Left colon (tissue), 2 donors: ENCODE measurements at regions of chr3 and their contacts with region 1.

Region 1: GRCh38 chr3:197256836-197257444 is 41.5 kb downstream of the DLG1 start:
- DNase-seq: peak in 1 of 2 donors; percentile 30
- ATAC-seq: peak; percentile 43

Region 2: DNA sequence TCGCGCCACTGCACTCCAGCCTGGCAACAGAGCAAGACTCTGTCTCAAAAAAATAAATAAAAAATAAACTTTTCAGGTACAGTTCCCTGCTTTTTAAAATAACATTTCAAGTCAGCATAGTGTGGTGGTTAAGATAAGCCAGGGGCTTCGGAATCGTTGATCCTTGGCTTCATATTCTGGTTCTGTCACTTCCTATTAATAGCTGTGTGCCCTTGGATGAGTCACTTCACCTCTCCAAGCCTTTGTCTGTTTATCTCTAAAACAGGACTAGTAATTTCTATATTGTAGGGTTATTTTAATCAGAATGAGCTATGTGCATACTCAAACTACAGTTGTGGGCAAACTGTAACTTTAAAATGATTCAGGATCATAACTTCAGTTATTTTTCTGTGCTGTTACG is 443.0 kb before region 1 on chr3:
- intact Hi-C with region 1: no loop called
- DNase-seq: no peak
- ATAC-seq: no peak

Region 3: DNA sequence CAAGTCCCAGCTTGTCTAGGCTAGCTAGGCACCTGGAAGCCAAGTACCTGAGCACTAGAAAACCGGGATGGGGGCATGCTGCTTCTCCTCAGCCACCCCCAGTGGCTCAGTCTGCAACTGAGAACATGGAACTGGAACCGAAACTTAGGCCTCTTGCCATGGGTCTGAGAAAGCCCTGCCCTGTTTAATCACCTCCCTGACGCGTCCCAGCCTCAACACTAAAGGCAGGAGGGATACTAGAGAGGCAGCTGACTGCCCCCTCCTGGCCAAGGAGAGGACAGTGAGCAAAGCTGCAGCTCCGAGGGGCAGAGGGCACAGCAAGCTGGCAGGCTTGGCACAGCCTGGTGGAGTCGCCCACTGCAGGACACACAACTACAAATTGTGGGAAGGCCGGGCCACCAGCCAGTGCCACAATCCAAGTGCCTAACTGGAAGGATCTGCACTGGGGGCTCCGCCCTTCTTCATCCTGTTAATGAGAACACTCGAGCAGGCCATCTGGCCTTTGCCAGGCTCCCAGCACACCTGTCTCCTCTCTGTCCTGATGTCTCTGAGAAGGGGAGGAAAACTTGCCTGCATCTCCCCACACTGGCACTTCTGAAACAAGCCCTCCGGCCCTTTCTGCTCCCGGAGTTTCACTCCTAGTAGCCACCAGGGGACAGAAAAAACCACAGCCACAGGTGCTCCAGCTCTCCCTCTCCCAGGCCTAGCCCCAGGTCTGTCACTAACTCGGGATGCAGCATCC is 245.1 kb after region 1 on chr3:
- intact Hi-C with region 1: loop called in 1 of 2 experiments (anchors 10 kb)
- DNase-seq: peak; percentile 80 to 91
- ATAC-seq: peak; percentile 69

Region 4: DNA sequence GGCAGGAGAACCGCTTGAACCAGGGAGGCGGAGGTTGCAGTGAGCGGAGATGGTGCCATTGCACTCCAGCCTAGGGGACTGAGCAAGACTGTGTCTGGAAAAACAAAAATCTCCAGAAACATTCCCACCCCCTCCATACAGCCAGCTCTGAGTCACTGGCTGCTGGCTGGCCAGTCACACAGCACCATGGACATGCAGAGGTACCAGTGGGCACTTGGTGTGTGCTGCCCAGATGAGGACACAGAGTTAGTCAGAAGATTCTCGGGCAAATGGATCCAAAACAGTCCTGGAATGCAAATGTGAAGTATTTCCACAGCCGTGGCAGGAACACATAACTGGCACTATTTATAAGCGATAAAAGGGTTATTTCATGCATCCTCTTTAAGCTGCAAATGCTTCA is 254.2 kb after region 1 on chr3:
- intact Hi-C with region 1: loop called (anchors 5 to 10 kb)
- DNase-seq: no peak
- ATAC-seq: no peak